CD8-positive, alpha-beta T cell (primary cell): ENCODE measurements at regions of chr15 and their contacts with region 1.

Region 1: GRCh38 chr15:82046666-82047452 is 1.0 kb upstream of the MEX3B start:
- DNase-seq: peak; percentile 70 to 93 (median 86)
- ATAC-seq: peak; percentile 81
- H3K4me3 ChIP-seq: peak overlapping the region; percentile 76 to 98
- H3K4me3 Mint-ChIP-seq: peak overlapping the region; percentile 89
- H3K27ac ChIP-seq: peak overlapping the region; percentile 65 to 70
- H3K27ac Mint-ChIP-seq: peak overlapping the region; percentile 77
- H3K4me1 ChIP-seq: peaks cover 19% of the 10 kb centered on the region
- H3K4me1 Mint-ChIP-seq: peaks cover 16% of the 10 kb centered on the region
- H3K27me3 ChIP-seq: peaks cover 0 to 7% of the 10 kb centered on the region in 2 experiments
- H3K27me3 Mint-ChIP-seq: peaks cover 3% of the 10 kb centered on the region
- CTCF ChIP-seq: peak; percentile 57

Region 2: GRCh38 chr15:80989518-80990478 is 1057.1 kb before region 1 on chr15 and contains the start of gene MESD:
- CTCF ChIA-PET with region 1: no interaction called
- POLR2A ChIA-PET with region 1: no interaction called
- intact Hi-C with region 1: loop called in 1 of 2 experiments (anchors 5 kb)
- DNase-seq: peak; percentile 91 to 99 (median 98)
- ATAC-seq: peak; percentile 100
- H3K4me3 ChIP-seq: peak within 1 kb of the TSS; percentile 70 to 96
- H3K4me3 Mint-ChIP-seq: peak within 1 kb of the TSS; percentile 100
- H3K27ac ChIP-seq: peak within 1 kb of the TSS; percentile 76 to 95
- H3K27ac Mint-ChIP-seq: peak within 1 kb of the TSS; percentile 99
- H3K4me1 ChIP-seq: peaks cover 50% of the 10 kb centered on the region
- H3K4me1 Mint-ChIP-seq: peaks cover 62% of the 10 kb centered on the region
- H3K27me3 ChIP-seq: no peaks in the 10 kb centered on the region
- H3K27me3 Mint-ChIP-seq: no peaks in the 10 kb centered on the region
- CTCF ChIP-seq: no peak
- total RNA-seq, gene MESD: 6.4 to 8.1 TPM

Region 3: DNA sequence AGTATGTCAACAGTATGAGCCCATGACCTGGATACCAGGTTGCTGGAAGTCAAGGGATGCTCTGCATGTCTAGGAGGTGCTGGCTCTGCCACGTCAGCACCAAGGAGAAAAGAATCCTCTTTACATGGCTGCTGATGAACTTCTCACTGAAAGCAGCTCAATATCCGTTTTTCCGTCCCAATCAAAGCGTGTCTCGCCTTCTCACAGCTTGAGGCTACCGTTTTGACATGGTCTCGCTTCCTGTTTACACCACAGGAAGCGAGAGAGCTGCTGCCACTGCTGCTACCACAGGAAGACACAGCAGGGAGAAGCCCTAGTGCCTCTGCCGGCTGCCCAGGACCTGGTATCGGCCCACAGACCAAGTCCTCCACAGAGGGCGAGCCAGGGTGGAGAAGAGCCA is 750.2 kb before region 1 on chr15:
- CTCF ChIA-PET with region 1: no interaction called
- POLR2A ChIA-PET with region 1: no interaction called
- intact Hi-C with region 1: loop called (anchors 5 to 10 kb)
- DNase-seq: peak; percentile 50 to 94 (median 79)
- ATAC-seq: peak; percentile 46
- H3K4me3 ChIP-seq: peak overlapping the region; percentile 88 to 89
- H3K4me3 Mint-ChIP-seq: peak overlapping the region; percentile 92
- H3K27ac ChIP-seq: peak overlapping the region; percentile 84 to 92
- H3K27ac Mint-ChIP-seq: peak overlapping the region; percentile 98
- H3K4me1 ChIP-seq: peaks cover 55% of the 10 kb centered on the region
- H3K4me1 Mint-ChIP-seq: peaks cover 72% of the 10 kb centered on the region
- H3K27me3 ChIP-seq: no peaks in the 10 kb centered on the region
- H3K27me3 Mint-ChIP-seq: no peaks in the 10 kb centered on the region
- CTCF ChIP-seq: no peak

Region 4: GRCh38 chr15:81400640-81401236 is 646.1 kb before region 1 on chr15:
- CTCF ChIA-PET with region 1: no interaction called
- POLR2A ChIA-PET with region 1: no interaction called
- intact Hi-C with region 1: loop called in 1 of 2 experiments (anchors 5 kb)
- DNase-seq: peak in 3 of 9 experiments; percentile 17 to 73 (median 65)
- ATAC-seq: peak; percentile 62
- H3K4me3 ChIP-seq: no peak overlapping the region
- H3K4me3 Mint-ChIP-seq: no peak overlapping the region
- H3K27ac ChIP-seq: no peak overlapping the region
- H3K27ac Mint-ChIP-seq: no peak overlapping the region
- H3K4me1 ChIP-seq: no peaks in the 10 kb centered on the region
- H3K4me1 Mint-ChIP-seq: peaks cover 2% of the 10 kb centered on the region
- H3K27me3 ChIP-seq: no peaks in the 10 kb centered on the region
- H3K27me3 Mint-ChIP-seq: no peaks in the 10 kb centered on the region
- CTCF ChIP-seq: peak; percentile 78

Region 5: DNA sequence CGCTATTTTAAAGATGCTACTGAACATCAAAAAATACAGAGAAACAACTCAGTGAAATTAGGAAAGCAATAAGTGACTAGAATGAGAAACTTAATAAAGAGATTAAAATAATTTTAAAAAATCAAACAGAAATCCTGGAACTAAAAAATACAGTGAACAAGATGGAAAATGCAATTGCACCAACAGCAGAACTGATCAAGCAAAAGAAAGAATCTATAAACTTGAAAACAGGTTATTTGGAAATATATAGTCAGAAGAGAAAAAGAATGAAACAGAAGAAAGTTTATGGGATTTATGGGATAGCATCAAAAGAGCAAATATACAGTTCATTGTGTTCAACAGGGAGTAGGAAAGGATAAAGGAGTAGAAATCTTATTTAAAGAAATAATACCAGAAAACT is 54.3 kb before region 1 on chr15:
- CTCF ChIA-PET with region 1: no interaction called
- POLR2A ChIA-PET with region 1: no interaction called
- intact Hi-C with region 1: loop called in 1 of 2 experiments (anchors 2 kb)
- DNase-seq: no peak
- ATAC-seq: no peak
- H3K4me3 ChIP-seq: no peak overlapping the region
- H3K4me3 Mint-ChIP-seq: no peak overlapping the region
- H3K27ac ChIP-seq: no peak overlapping the region
- H3K27ac Mint-ChIP-seq: no peak overlapping the region
- H3K4me1 ChIP-seq: no peaks in the 10 kb centered on the region
- H3K4me1 Mint-ChIP-seq: no peaks in the 10 kb centered on the region
- H3K27me3 ChIP-seq: no peaks in the 10 kb centered on the region
- H3K27me3 Mint-ChIP-seq: peaks cover 20% of the 10 kb centered on the region
- CTCF ChIP-seq: no peak

Region 6: DNA sequence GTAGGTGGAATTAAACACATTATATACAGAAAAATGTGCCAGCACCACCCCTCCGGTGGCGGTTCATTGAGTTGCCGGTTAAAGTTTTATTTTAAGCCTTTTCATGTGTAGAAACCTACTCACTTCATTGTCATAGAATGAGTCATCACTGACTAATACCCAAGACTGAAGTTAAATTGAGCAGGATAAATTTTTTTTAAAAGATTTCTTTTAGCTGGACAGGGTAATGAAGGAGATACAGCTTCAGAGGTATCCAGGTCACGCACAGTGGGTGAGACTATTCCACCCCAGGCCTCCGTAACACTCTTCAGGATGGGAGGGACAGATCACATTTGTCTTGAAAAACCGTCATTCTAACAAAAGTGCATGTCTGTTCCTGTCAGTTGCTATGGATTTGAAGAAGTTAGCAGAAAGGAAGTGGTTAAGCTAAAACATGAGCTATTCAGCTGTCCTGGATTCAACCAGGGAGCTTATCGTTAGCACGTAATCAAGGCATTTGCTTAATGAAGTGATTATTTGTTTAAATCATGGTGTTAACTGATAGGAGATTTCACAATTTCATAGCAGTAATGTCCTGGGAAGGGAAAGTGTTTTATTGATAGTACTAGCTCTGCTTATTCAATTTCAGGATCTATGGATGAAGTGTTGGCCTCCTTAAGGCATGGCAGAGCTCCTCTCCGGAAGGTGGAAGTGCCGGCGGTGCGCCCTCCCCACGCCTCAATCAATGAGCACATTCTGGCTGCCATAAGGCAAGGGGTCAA is 785.9 kb after region 1 on chr15:
- CTCF ChIA-PET with region 1: no interaction called
- POLR2A ChIA-PET with region 1: no interaction called
- intact Hi-C with region 1: no loop called
- DNase-seq: no peak
- ATAC-seq: peak; percentile 44
- H3K4me3 ChIP-seq: no peak overlapping the region
- H3K4me3 Mint-ChIP-seq: no peak overlapping the region
- H3K27ac ChIP-seq: no peak overlapping the region
- H3K27ac Mint-ChIP-seq: no peak overlapping the region
- H3K4me1 ChIP-seq: no peaks in the 10 kb centered on the region
- H3K4me1 Mint-ChIP-seq: peaks cover 7% of the 10 kb centered on the region
- H3K27me3 ChIP-seq: no peaks in the 10 kb centered on the region
- H3K27me3 Mint-ChIP-seq: no peaks in the 10 kb centered on the region
- CTCF ChIP-seq: no peak

Region 7: GRCh38 chr15:83066734-83067637 is 1020.1 kb after region 1 on chr15 and contains the start of gene BTBD1:
- CTCF ChIA-PET with region 1: no interaction called
- POLR2A ChIA-PET with region 1: no interaction called
- intact Hi-C with region 1: loop called in 1 of 2 experiments (anchors 10 kb)
- DNase-seq: peak; percentile 44 to 89 (median 75)
- ATAC-seq: peak; percentile 78
- H3K4me3 ChIP-seq: peak within 1 kb of the TSS; percentile 77 to 84
- H3K4me3 Mint-ChIP-seq: peak within 1 kb of the TSS; percentile 87
- H3K27ac ChIP-seq: peak within 1 kb of the TSS; percentile 65 to 78
- H3K27ac Mint-ChIP-seq: peak within 1 kb of the TSS; percentile 77
- H3K4me1 ChIP-seq: peaks cover 42% of the 10 kb centered on the region
- H3K4me1 Mint-ChIP-seq: peaks cover 26% of the 10 kb centered on the region
- H3K27me3 ChIP-seq: no peaks in the 10 kb centered on the region
- H3K27me3 Mint-ChIP-seq: no peaks in the 10 kb centered on the region
- CTCF ChIP-seq: no peak
- total RNA-seq, gene BTBD1: 32.5 to 33.6 TPM